ENCODE measurements at regions of chr11 and their contacts with region 1.

Region 1: GRCh38 chr11:35617687-35618496 is at the start of gene FJX1:
- DNase-seq: peak in 1 of 2 donors; percentile 88
- H3K4me3 ChIP-seq: peak within 1 kb of the TSS; percentile 60 to 77 (median 63)
- H3K27ac ChIP-seq: peak within 1 kb of the TSS; percentile 63 to 86 (median 80)
- H3K4me1 ChIP-seq: peaks cover 17 to 49% (median 36%) of the 10 kb centered on the region in 4 donors
- H3K27me3 ChIP-seq: peaks cover 0 to 80% (median 49%) of the 10 kb centered on the region in 3 donors
- CTCF ChIP-seq: no peak
- EP300 ChIP-seq: no peak
- POLR2A ChIP-seq: no peak
- total RNA-seq, gene FJX1: 0.45 to 5.2 (median 3.7) TPM in 3 of 5 donors, not detected in the others

Region 2: GRCh38 chr11:35494957-35495490 is 122.9 kb before region 1 on chr11:
- intact Hi-C with region 1: no loop called
- DNase-seq: no peak
- H3K4me3 ChIP-seq: no peak overlapping the region
- H3K27ac ChIP-seq: no peak overlapping the region
- H3K4me1 ChIP-seq: peaks cover 0 to 5% (median 2%) of the 10 kb centered on the region in 4 donors
- H3K27me3 ChIP-seq: no peaks in the 10 kb centered on the region
- CTCF ChIP-seq: no peak
- EP300 ChIP-seq: no peak
- POLR2A ChIP-seq: no peak

Region 3: GRCh38 chr11:35747668-35748067 is 129.8 kb after region 1 on chr11:
- intact Hi-C with region 1: no loop called
- DNase-seq: peak in 1 of 2 donors; percentile 31
- H3K4me3 ChIP-seq: no peak overlapping the region
- H3K27ac ChIP-seq: no peak overlapping the region
- H3K4me1 ChIP-seq: no peaks in the 10 kb centered on the region
- H3K27me3 ChIP-seq: no peaks in the 10 kb centered on the region
- CTCF ChIP-seq: no peak
- EP300 ChIP-seq: no peak
- POLR2A ChIP-seq: no peak

Region 4: GRCh38 chr11:35815556-35816315 is 197.8 kb after region 1 on chr11:
- intact Hi-C with region 1: loop called (anchors 10 kb)
- DNase-seq: peak in 1 of 2 donors; percentile 84
- H3K4me3 ChIP-seq: no peak overlapping the region
- H3K27ac ChIP-seq: no peak overlapping the region
- H3K4me1 ChIP-seq: peaks cover 0 to 28% (median 8%) of the 10 kb centered on the region in 4 donors
- H3K27me3 ChIP-seq: no peaks in the 10 kb centered on the region
- CTCF ChIP-seq: no peak
- EP300 ChIP-seq: no peak
- POLR2A ChIP-seq: no peak

Region 5: DNA sequence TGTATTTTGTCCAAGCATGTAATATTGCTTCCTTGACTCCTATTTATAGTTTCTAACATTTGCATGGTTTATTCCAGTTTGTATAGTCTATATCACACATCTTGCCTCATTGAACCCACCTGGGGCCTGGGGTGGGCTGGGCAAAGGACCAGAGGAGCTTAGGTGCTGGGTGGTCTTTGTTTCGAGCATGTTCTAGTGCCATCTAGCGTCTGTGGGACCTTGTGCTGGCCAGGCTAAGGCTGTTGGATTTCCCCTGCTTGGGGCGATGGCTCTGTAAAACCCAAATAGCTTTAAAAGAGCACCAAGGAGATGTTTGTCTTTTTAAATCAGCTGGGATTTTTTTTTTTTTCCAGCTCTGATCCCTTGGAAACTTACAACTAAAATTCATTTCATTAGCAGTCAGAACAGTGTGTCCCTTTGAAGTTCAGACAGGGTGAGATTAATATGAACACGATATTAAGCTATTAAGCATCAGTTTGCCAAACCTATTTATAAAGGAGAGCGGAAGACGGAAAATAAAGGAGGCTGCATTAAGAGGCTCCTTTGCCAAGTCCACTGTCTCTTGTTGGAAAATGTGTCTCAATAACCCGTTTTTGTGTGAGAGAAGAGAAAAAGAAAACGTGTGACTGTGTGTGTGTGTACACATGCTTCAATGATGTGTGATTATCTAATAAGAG is 514.0 kb after region 1 on chr11:
- intact Hi-C with region 1: loop called (anchors 10 kb)
- DNase-seq: peak; percentile 30 to 85
- H3K4me3 ChIP-seq: no peak overlapping the region
- H3K27ac ChIP-seq: no peak overlapping the region
- H3K4me1 ChIP-seq: no peaks in the 10 kb centered on the region
- H3K27me3 ChIP-seq: no peaks in the 10 kb centered on the region
- CTCF ChIP-seq: peak in 5 of 7 experiments; percentile 24 to 54 (median 37)
- EP300 ChIP-seq: no peak
- POLR2A ChIP-seq: no peak

Region 6: GRCh38 chr11:36265793-36266628 is 648.1 kb after region 1 on chr11:
- intact Hi-C with region 1: loop called (anchors 5 kb)
- DNase-seq: peak; percentile 60 to 81
- H3K4me3 ChIP-seq: no peak overlapping the region
- H3K27ac ChIP-seq: no peak overlapping the region
- H3K4me1 ChIP-seq: peaks cover 0 to 5% (median 0%) of the 10 kb centered on the region in 4 donors
- H3K27me3 ChIP-seq: peaks cover 0 to 12% (median 0%) of the 10 kb centered on the region in 3 donors
- CTCF ChIP-seq: peak in 5 of 7 experiments; percentile 40 to 79 (median 70)
- EP300 ChIP-seq: no peak
- POLR2A ChIP-seq: no peak

Measured in stomach (tissue), 19 donors.